ENCODE measurements at regions of chr16 and their contacts with region 1.

Region 1: GRCh38 chr16:75110637-75111513 is 5.7 kb downstream of the LDHD start:
- DNase-seq: peak; percentile 96

Region 2: DNA sequence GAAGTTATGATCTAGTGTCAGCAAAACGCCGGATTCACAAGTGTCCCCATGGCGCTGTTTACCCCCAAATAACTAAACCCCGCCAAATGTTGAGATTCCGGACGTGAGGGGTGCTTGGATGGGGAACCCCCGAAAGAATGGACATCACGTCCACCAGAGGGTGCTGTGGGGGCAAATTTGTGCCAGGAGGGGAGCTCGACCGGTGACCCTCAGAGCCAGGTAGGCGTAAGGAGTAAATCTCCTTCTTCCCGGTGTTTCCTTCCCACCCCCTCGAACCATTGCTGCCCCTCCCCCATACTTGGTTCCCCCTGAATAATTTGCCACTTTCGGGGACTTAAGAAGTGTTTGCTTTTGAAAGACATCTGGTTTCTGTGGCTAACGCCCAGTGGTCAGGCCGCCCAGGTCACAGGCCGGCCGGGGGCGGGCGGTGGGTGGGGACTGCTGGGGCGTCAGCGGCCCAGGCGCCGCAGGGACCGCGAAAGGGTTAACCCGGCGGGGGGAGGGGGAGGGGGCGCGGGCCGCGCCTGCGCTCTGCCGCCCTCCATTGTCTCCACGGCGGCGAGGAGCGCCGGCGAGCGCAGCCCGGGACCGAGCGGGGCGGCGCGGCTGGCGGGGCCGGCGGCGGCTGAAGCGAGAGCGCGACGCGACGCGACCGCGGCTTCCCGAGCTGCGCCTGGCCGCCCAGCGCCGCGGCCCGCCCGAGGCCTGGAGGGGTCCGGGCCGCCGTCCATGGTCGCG is 112.2 kb before region 1 on chr16 and contains the start of gene ZNRF1:
- intact Hi-C with region 1: loop called (anchors 2 kb)
- DNase-seq: peak; percentile 94
- total RNA-seq, gene ZNRF1: 15.4 to 23.5 TPM

Region 3: DNA sequence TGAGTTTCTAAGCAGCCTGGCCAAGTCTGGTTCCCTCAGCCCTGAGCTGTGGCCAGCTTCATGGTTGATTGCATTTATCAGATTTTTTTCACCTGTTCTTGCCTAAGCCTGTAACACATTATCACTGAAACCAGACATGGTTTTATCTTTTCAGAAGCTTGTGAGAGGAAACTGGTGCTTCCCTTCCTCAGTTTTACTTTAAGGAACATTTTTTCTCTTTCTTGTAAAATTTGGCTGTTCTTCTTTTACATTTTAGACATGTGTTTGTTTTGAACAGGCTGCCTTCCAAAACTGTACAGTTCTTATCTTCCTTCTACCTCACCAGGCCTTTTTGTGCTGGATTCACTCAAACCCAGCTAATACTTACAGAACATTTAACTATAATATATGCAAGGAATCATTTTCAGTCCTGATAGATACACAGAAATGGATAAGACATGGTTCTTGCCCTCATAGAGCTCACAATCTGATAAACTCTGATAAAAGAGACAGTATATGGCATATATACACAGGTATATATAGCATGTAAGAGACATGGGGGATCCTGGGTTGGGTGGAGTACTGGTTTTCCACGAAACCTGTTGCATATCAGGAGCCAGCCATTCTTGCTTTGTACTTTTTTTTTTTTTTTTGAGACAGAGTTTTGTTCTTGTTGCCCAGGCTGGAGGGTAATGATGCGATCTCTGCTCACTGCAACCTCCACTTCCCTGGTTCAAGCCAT is 67.5 kb before region 1 on chr16:
- intact Hi-C with region 1: loop called in 1 of 2 experiments (anchors 10 kb)
- DNase-seq: no peak

Measured in posterior vena cava (tissue), 2 donors.